SK-N-SH (cell line): ENCODE measurements at regions of chr22 and their contacts with region 1.

Region 1: DNA sequence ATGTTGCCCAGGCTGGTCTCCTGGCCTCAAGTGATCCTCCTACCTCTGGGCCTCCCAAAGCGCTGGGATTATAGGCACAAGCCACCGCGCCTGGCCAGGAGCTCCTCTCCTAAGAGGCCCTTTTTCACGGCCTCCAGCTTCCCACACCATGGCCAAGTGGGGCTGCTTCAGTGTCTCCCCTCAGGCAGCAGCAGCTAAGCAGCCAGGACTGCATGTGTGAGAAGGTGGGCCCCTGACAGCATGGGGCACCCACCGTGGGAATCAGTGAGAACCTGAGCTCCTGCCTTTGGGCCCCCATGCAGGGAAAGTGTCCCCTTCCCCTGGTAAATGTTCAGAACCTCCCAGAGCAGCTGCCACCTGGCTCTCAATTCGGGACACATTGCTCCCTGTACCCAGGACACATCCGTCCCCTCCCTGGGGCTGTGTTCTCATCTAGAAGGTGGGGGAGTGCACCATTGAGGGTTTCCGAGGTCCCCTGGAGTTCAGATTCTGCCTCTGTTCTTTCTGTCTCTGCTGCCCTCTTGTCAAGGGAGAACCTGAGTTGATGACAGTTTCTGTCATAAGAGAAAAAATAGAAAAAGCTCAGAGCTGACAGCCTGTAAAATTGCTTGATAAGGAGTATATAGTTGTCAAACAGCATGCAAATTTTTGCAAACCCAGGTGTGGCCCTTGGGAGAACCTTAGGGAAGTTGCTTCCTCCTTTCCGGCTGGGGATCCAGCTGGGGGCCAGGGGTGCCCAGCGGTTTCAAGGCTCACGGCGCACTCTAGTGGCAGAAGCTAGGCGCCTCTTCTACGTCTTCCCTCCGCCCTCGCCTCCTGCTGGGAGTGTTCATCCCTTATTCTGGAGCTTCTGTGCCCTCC is 29.7 kb downstream of the FAM83F start:
- DNase-seq: peak; percentile 85
- H3K4me3 ChIP-seq: peak overlapping the region in 1 of 2 experiments; percentile 37; a peak in 1 of 4 replicates
- H3K27ac ChIP-seq: no peak overlapping the region
- H3K4me1 ChIP-seq: peaks cover 0 to 11% of the 10 kb centered on the region in 2 experiments; a peak in 1 of 4 replicates
- H3K27me3 ChIP-seq: no peaks in the 10 kb centered on the region
- CTCF ChIP-seq: peak; percentile 72
- EP300 ChIP-seq: no peak
- RAD21 ChIP-seq: peak; percentile 84

Region 2: GRCh38 chr22:39543095-39543494 is 481.3 kb before region 1 on chr22:
- CTCF ChIA-PET with region 1: interaction called, 39 read pairs
- POLR2A ChIA-PET with region 1: no interaction called
- DNase-seq: peak; percentile 72
- H3K4me3 ChIP-seq: no peak overlapping the region; a peak in 1 of 4 replicates
- H3K27ac ChIP-seq: no peak overlapping the region
- H3K4me1 ChIP-seq: no peaks in the 10 kb centered on the region; a peak in 1 of 4 replicates
- H3K27me3 ChIP-seq: no peaks in the 10 kb centered on the region
- CTCF ChIP-seq: peak; percentile 54
- EP300 ChIP-seq: no peak
- RAD21 ChIP-seq: peak; percentile 64

Region 3: GRCh38 chr22:39556970-39557841 is 467.2 kb before region 1 on chr22:
- CTCF ChIA-PET with region 1: interaction called, 14 read pairs
- POLR2A ChIA-PET with region 1: no interaction called
- DNase-seq: peak; percentile 71
- H3K4me3 ChIP-seq: peak overlapping the region; percentile 23 to 30; a peak in 2 of 4 replicates
- H3K27ac ChIP-seq: no peak overlapping the region
- H3K4me1 ChIP-seq: no peaks in the 10 kb centered on the region; a peak in 1 of 4 replicates
- H3K27me3 ChIP-seq: no peaks in the 10 kb centered on the region; the same call in 1 of the 2 replicates
- CTCF ChIP-seq: peak; percentile 21; the same call in 1 of the 2 replicates
- EP300 ChIP-seq: no peak
- RAD21 ChIP-seq: peak; percentile 51

Region 4: GRCh38 chr22:39877079-39877845 is 147.2 kb before region 1 on chr22:
- CTCF ChIA-PET with region 1: no interaction called
- POLR2A ChIA-PET with region 1: no interaction called
- DNase-seq: no peak
- H3K4me3 ChIP-seq: no peak overlapping the region
- H3K27ac ChIP-seq: no peak overlapping the region
- H3K4me1 ChIP-seq: no peaks in the 10 kb centered on the region
- H3K27me3 ChIP-seq: no peaks in the 10 kb centered on the region
- CTCF ChIP-seq: no peak
- EP300 ChIP-seq: no peak
- RAD21 ChIP-seq: no peak

Region 5: DNA sequence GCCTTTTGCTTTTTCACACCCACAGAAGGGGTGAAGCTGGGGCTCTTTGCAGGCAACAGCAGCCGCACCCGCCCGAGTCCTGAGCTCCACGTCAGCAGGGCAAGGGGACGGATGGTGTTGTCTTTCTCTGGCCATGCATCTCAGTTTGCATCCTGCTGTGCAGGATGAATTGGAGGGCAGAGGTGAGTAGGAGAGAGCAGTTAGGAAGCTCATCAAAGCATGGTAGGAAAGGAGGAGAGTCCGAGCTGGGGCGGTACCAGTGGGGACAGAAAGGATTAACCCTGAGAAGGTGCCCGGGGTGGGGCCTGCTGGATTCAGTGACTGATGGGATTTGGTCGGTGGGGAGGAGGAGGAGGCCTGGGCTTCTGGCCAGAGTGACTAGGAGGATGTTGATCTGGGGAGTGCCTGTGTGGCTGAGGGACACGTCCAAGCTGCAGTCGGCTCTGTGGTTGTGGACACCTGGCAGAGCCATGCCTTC is 15.1 kb before region 1 on chr22:
- CTCF ChIA-PET with region 1: interaction called, 13 read pairs
- POLR2A ChIA-PET with region 1: no interaction called
- DNase-seq: no peak
- H3K4me3 ChIP-seq: no peak overlapping the region
- H3K27ac ChIP-seq: no peak overlapping the region
- H3K4me1 ChIP-seq: peaks cover 0 to 7% of the 10 kb centered on the region in 2 experiments; a peak in 1 of 4 replicates
- H3K27me3 ChIP-seq: no peaks in the 10 kb centered on the region
- CTCF ChIP-seq: no peak
- EP300 ChIP-seq: no peak
- RAD21 ChIP-seq: no peak

Region 6: DNA sequence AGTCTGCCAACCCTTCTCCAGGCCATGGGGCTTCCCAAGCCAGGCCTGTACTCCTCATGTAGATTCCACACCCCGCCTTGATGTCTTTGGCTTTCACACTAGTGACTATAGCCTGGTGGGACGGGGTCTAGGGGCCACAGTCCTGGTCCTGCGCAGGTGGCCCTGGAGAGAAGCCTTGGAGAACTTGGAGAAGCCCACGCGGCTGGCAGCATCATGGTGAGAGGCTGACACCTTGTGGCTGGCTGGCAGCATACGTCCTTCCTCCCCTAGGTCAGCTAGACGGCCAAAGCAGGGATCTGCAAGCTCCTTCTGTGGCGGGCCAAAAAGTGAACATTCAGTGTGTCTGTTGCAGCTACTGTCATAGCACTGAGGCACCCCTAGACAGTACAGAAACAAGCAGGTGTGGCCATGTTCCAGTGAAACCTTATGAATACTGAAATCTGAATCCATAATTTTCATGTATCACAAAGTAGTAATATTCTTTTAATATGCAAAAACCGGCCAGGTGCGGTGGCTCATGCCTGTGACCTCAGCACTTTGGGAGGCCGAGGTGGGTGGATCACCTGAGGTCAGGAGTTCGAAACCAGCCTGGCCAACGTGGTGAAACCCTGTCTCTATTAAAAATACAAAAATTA is 12.3 kb after region 1 on chr22:
- CTCF ChIA-PET with region 1: interaction called, 32 read pairs
- POLR2A ChIA-PET with region 1: interaction called, 3 read pairs
- DNase-seq: peak; percentile 70
- H3K4me3 ChIP-seq: peak overlapping the region in 1 of 2 experiments; percentile 26; a peak in 1 of 4 replicates
- H3K27ac ChIP-seq: no peak overlapping the region
- H3K4me1 ChIP-seq: peaks cover 4 to 6% of the 10 kb centered on the region in 2 experiments; a peak in 2 of 4 replicates
- H3K27me3 ChIP-seq: no peaks in the 10 kb centered on the region
- CTCF ChIP-seq: peak; percentile 65
- EP300 ChIP-seq: no peak
- RAD21 ChIP-seq: peak; percentile 88

Region 7: DNA sequence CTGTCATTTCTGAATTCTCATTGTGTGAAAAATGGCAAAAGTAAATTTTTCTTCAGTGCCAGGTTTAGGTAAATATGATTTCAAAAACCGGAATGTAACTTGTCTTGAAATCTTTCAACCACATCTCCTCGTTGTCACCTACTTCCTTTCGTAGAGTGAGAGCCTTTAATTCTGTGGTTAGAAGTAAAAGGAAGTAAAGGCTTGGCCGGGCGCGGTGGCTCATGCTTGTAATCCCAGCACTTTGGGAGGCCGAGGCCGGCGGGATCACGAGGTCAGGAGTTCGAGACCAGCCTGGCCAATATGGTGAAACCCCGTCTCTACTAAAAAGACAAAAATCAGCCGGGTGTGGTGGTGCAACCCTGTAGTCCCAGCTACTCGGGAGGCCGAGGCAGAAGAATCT is 375.7 kb after region 1 on chr22:
- CTCF ChIA-PET with region 1: no interaction called
- POLR2A ChIA-PET with region 1: no interaction called
- DNase-seq: no peak
- H3K4me3 ChIP-seq: no peak overlapping the region
- H3K27ac ChIP-seq: no peak overlapping the region
- H3K4me1 ChIP-seq: peaks cover 0 to 10% of the 10 kb centered on the region in 2 experiments; a peak in 2 of 4 replicates
- H3K27me3 ChIP-seq: no peaks in the 10 kb centered on the region
- CTCF ChIP-seq: no peak
- EP300 ChIP-seq: no peak
- RAD21 ChIP-seq: no peak